Natural killer cell (primary cell): ENCODE measurements at regions of chr1 and their contacts with region 1.

Region 1: GRCh38 chr1:198919667-198920398 is 281.0 kb downstream of the PTPRC start:
- DNase-seq: peak in 1 of 2 donors; percentile 49
- ATAC-seq: peak; percentile 70 to 80 (median 71)
- H3K4me3 ChIP-seq: no peak overlapping the region
- H3K4me3 Mint-ChIP-seq: peak overlapping the region; percentile 85
- H3K27ac ChIP-seq: peak overlapping the region; percentile 66
- H3K27ac Mint-ChIP-seq: peak overlapping the region; percentile 91 to 92
- H3K4me1 ChIP-seq: peaks cover 12% of the 10 kb centered on the region
- H3K4me1 Mint-ChIP-seq: peaks cover 77 to 79% of the 10 kb centered on the region in 2 donors
- H3K27me3 ChIP-seq: no peaks in the 10 kb centered on the region
- H3K27me3 Mint-ChIP-seq: no peaks in the 10 kb centered on the region
- CTCF ChIP-seq: no peak

Region 2: DNA sequence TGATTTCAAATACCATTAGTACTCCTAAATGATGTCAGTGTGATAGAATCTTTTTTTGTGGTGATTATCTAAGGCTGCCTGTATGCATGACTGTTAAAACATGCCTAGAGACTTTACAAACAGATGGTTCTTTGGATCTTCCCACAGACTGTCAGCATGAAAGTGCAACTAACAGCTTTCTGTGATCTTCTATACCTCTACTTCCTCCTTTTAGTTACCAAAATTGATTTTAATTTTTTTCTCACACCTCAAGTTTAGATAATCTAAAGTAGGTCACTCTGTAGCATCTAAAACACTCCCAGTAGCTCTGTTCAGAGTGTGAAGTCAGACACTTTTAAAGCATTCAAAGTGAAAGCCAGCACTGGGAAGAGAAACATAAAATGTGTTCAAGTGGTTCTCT is 253.5 kb after region 1 on chr1:
- intact Hi-C with region 1: loop called (anchors 1 kb)
- DNase-seq: peak in 1 of 2 donors; percentile 77
- ATAC-seq: peak; percentile 77 to 92 (median 89)
- H3K4me3 ChIP-seq: no peak overlapping the region
- H3K4me3 Mint-ChIP-seq: peak overlapping the region; percentile 49
- H3K27ac ChIP-seq: peak overlapping the region; percentile 90
- H3K27ac Mint-ChIP-seq: peak overlapping the region; percentile 88 to 94
- H3K4me1 ChIP-seq: peaks cover 37% of the 10 kb centered on the region
- H3K4me1 Mint-ChIP-seq: peaks cover 65 to 78% of the 10 kb centered on the region in 2 donors
- H3K27me3 ChIP-seq: no peaks in the 10 kb centered on the region
- H3K27me3 Mint-ChIP-seq: no peaks in the 10 kb centered on the region
- CTCF ChIP-seq: no peak

Region 3: DNA sequence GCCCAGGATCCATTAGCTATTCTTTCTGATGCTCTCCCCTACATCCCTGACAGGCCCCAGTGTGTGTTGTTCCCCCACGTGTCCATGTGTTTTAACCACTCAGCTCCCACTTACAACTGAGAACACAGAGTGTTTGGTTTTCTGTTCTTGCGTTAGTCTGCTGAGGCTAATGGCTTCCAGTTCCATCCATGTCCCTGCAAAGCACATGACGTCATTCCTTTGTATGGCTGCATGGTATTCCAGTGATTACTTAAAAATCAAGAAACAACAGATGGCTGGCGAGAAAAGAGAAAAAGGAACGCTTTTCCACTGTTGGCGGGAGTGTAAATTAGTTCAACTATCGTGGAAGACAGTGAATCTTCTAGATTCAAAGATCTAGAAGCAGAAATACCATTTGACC is 275.0 kb after region 1 on chr1:
- intact Hi-C with region 1: no loop called
- DNase-seq: no peak
- ATAC-seq: no peak
- H3K4me3 ChIP-seq: no peak overlapping the region
- H3K4me3 Mint-ChIP-seq: no peak overlapping the region
- H3K27ac ChIP-seq: no peak overlapping the region
- H3K27ac Mint-ChIP-seq: no peak overlapping the region
- H3K4me1 ChIP-seq: no peaks in the 10 kb centered on the region
- H3K4me1 Mint-ChIP-seq: peaks cover 0 to 3% of the 10 kb centered on the region in 2 donors
- H3K27me3 ChIP-seq: no peaks in the 10 kb centered on the region
- H3K27me3 Mint-ChIP-seq: peaks cover 0 to 2% of the 10 kb centered on the region in 2 donors
- CTCF ChIP-seq: no peak